AG04450 (cell line): ENCODE measurements at regions of chr16 and their contacts with region 1.

Region 1: GRCh38 chr16:67428146-67428731 is 2.7 kb upstream of the HSD11B2 start:
- DNase-seq: no peak
- H3K4me3 ChIP-seq: no peak overlapping the region
- H3K27ac ChIP-seq: no peak overlapping the region
- H3K27me3 ChIP-seq: peaks cover 56% of the 10 kb centered on the region
- CTCF ChIP-seq: peak; percentile 95

Region 2: DNA sequence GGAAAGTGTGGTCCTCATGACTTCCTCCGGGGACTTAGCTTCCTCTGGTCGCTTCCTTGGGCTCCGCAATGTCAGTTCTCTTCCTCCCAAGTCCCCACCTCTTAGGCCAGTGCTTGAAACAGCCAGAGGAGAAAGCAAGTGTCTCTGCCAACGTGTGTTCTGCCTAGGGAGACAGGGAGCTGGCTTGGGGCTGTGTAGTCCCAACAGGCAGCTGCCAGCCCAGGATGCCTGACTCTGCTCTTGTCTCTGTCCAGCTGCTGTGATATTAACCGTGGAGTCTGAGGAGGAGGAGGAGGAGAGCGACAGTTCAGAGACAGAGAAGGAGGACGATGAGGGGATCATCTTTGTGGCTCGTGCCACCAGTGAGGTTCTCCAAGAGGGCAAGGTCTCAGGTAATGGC is 162.4 kb before region 1 on chr16:
- CTCF ChIA-PET with region 1: interaction called, 10 read pairs
- POLR2A ChIA-PET with region 1: interaction called, 4 read pairs
- DNase-seq: no peak
- H3K4me3 ChIP-seq: no peak overlapping the region
- H3K27ac ChIP-seq: no peak overlapping the region
- H3K27me3 ChIP-seq: no peaks in the 10 kb centered on the region
- CTCF ChIP-seq: no peak

Region 3: GRCh38 chr16:67441271-67441753 is 13.1 kb after region 1 on chr16:
- CTCF ChIA-PET with region 1: interaction called, 29 read pairs
- POLR2A ChIA-PET with region 1: interaction called, 4 read pairs
- DNase-seq: no peak
- H3K4me3 ChIP-seq: no peak overlapping the region
- H3K27ac ChIP-seq: no peak overlapping the region
- H3K27me3 ChIP-seq: no peaks in the 10 kb centered on the region
- CTCF ChIP-seq: no peak

Region 4: GRCh38 chr16:67456391-67457081 is 28.3 kb after region 1 on chr16:
- CTCF ChIA-PET with region 1: interaction called, 20 read pairs
- POLR2A ChIA-PET with region 1: interaction called, 3 read pairs
- DNase-seq: no peak
- H3K4me3 ChIP-seq: no peak overlapping the region
- H3K27ac ChIP-seq: peak overlapping the region; percentile 47
- H3K27me3 ChIP-seq: no peaks in the 10 kb centered on the region
- CTCF ChIP-seq: peak; percentile 62

Region 5: GRCh38 chr16:67470359-67470758 is 42.1 kb after region 1 on chr16:
- CTCF ChIA-PET with region 1: interaction called, 154 read pairs
- POLR2A ChIA-PET with region 1: interaction called, 6 read pairs
- DNase-seq: no peak
- H3K4me3 ChIP-seq: no peak overlapping the region
- H3K27ac ChIP-seq: no peak overlapping the region
- H3K27me3 ChIP-seq: no peaks in the 10 kb centered on the region
- CTCF ChIP-seq: no peak

Region 6: GRCh38 chr16:67514382-67514828 is 86.2 kb after region 1 on chr16:
- CTCF ChIA-PET with region 1: interaction called, 11 read pairs
- POLR2A ChIA-PET with region 1: no interaction called
- DNase-seq: peak; percentile 65
- H3K4me3 ChIP-seq: no peak overlapping the region
- H3K27ac ChIP-seq: no peak overlapping the region
- H3K27me3 ChIP-seq: no peaks in the 10 kb centered on the region
- CTCF ChIP-seq: peak; percentile 75